CD4-positive, alpha-beta memory T cell (primary cell): ENCODE measurements at regions of chr2 and their contacts with region 1.

Region 1: GRCh38 chr2:102355526-102356380 is at the start of gene IL18R1:
- DNase-seq: peak; percentile 63 to 72 (median 67)
- H3K4me3 ChIP-seq: peak within 1 kb of the TSS; percentile 80 to 81
- H3K4me3 Mint-ChIP-seq: peak within 1 kb of the TSS; percentile 94 to 99 (median 98)
- H3K27ac ChIP-seq: peak within 1 kb of the TSS; percentile 85
- H3K27ac Mint-ChIP-seq: peak within 1 kb of the TSS; percentile 93 to 98 (median 96)
- H3K4me1 ChIP-seq: peaks cover 46% of the 10 kb centered on the region
- H3K4me1 Mint-ChIP-seq: peaks cover 30 to 46% (median 38%) of the 10 kb centered on the region in 4 donors
- H3K27me3 ChIP-seq: no peaks in the 10 kb centered on the region
- H3K27me3 Mint-ChIP-seq: no peaks in the 10 kb centered on the region
- total RNA-seq, gene IL18R1: 9.5 to 11.0 TPM

Region 2: DNA sequence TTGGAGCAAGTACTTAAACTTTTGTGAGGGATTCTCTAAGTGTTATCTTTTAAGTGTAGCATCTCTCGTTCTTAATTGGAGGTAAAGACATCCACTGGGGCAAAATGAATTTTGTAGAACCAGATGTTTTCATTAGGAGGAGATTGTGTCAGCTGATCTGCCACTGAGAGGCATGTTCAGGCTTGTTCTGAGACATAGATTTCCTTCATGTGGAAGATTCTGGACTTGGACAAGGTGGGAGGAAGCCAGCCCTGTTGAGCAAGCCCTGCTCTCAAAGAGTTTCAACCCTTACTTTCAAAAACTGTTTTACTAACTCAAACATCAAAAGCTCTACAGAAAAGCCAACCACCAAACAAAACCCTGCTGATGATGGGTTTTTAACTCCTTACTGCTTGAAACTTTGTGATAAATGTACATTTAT is 651.7 kb before region 1 on chr2:
- CTCF ChIA-PET with region 1: no interaction called
- POLR2A ChIA-PET with region 1: no interaction called
- intact Hi-C with region 1: loop called (anchors 5 kb)
- DNase-seq: peak in 3 of 5 donors; percentile 44 to 45 (median 44)
- H3K4me3 ChIP-seq: no peak overlapping the region
- H3K4me3 Mint-ChIP-seq: peak overlapping the region; percentile 64 to 94 (median 90)
- H3K27ac ChIP-seq: peak overlapping the region; percentile 58
- H3K27ac Mint-ChIP-seq: peak overlapping the region; percentile 90 to 99 (median 96)
- H3K4me1 ChIP-seq: peaks cover 95% of the 10 kb centered on the region
- H3K4me1 Mint-ChIP-seq: peaks cover 12 to 67% (median 54%) of the 10 kb centered on the region in 4 donors
- H3K27me3 ChIP-seq: no peaks in the 10 kb centered on the region
- H3K27me3 Mint-ChIP-seq: no peaks in the 10 kb centered on the region

Region 3: GRCh38 chr2:102082571-102083392 is 273.0 kb before region 1 on chr2:
- CTCF ChIA-PET with region 1: interaction called, 3 read pairs
- POLR2A ChIA-PET with region 1: no interaction called
- intact Hi-C with region 1: loop called (anchors 10 kb)
- DNase-seq: peak; percentile 51 to 65 (median 54)
- H3K4me3 ChIP-seq: peak overlapping the region; percentile 2 to 32
- H3K4me3 Mint-ChIP-seq: peak overlapping the region; percentile 81 to 87 (median 84)
- H3K27ac ChIP-seq: peak overlapping the region; percentile 46
- H3K27ac Mint-ChIP-seq: peak overlapping the region; percentile 86 to 97 (median 95)
- H3K4me1 ChIP-seq: peaks cover 29% of the 10 kb centered on the region
- H3K4me1 Mint-ChIP-seq: peaks cover 26 to 43% (median 35%) of the 10 kb centered on the region in 4 donors
- H3K27me3 ChIP-seq: no peaks in the 10 kb centered on the region
- H3K27me3 Mint-ChIP-seq: no peaks in the 10 kb centered on the region

Region 4: GRCh38 chr2:102301867-102302362 is 53.8 kb before region 1 on chr2:
- CTCF ChIA-PET with region 1: interaction called, 6 read pairs
- POLR2A ChIA-PET with region 1: interaction called, 3 read pairs
- intact Hi-C with region 1: loop called (anchors 1 kb)
- DNase-seq: peak; percentile 33 to 60 (median 40)
- H3K4me3 ChIP-seq: no peak overlapping the region
- H3K4me3 Mint-ChIP-seq: peak overlapping the region in 6 of 8 donors; percentile 11 to 77 (median 50)
- H3K27ac ChIP-seq: no peak overlapping the region
- H3K27ac Mint-ChIP-seq: peak overlapping the region in 2 of 7 donors; percentile 43 to 54
- H3K4me1 ChIP-seq: peaks cover 12% of the 10 kb centered on the region
- H3K4me1 Mint-ChIP-seq: peaks cover 13 to 18% (median 15%) of the 10 kb centered on the region in 4 donors
- H3K27me3 ChIP-seq: no peaks in the 10 kb centered on the region
- H3K27me3 Mint-ChIP-seq: peaks cover 3 to 5% of the 10 kb centered on the region in 2 donors

Region 5: GRCh38 chr2:102313025-102313424 is 42.7 kb before region 1 on chr2:
- CTCF ChIA-PET with region 1: no interaction called
- POLR2A ChIA-PET with region 1: no interaction called
- intact Hi-C with region 1: no loop called
- DNase-seq: no peak
- H3K4me3 ChIP-seq: no peak overlapping the region
- H3K4me3 Mint-ChIP-seq: no peak overlapping the region
- H3K27ac ChIP-seq: no peak overlapping the region
- H3K27ac Mint-ChIP-seq: no peak overlapping the region
- H3K4me1 ChIP-seq: no peaks in the 10 kb centered on the region
- H3K4me1 Mint-ChIP-seq: no peaks in the 10 kb centered on the region
- H3K27me3 ChIP-seq: no peaks in the 10 kb centered on the region
- H3K27me3 Mint-ChIP-seq: peaks cover 2 to 5% of the 10 kb centered on the region in 2 donors

Region 6: DNA sequence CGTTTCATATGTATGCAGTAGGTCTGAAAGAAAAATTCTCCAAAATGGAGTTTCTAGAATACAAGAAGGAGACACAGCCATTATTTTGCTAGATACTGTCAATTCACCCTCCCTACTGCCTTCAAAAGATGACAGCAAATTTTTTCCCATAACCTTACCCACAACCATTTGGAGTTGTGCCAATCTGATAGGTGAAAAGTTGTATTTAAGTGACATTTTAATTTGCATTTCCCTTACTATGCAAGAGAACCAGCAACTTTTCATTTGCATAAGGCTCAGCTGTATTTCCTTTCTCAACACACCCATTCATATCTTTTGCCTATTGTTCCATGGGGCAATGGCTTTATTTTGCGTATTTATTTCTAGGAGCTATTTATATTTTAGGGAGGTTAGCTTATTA is 35.8 kb after region 1 on chr2:
- CTCF ChIA-PET with region 1: interaction called, 5 read pairs
- POLR2A ChIA-PET with region 1: no interaction called
- intact Hi-C with region 1: loop called (anchors 5 kb)
- DNase-seq: peak; percentile 63 to 77 (median 73)
- H3K4me3 ChIP-seq: no peak overlapping the region
- H3K4me3 Mint-ChIP-seq: peak overlapping the region in 5 of 8 donors; percentile 1 to 51 (median 23)
- H3K27ac ChIP-seq: no peak overlapping the region
- H3K27ac Mint-ChIP-seq: peak overlapping the region in 5 of 7 donors; percentile 5 to 60 (median 43)
- H3K4me1 ChIP-seq: peaks cover 16% of the 10 kb centered on the region
- H3K4me1 Mint-ChIP-seq: peaks cover 17 to 35% (median 30%) of the 10 kb centered on the region in 4 donors
- H3K27me3 ChIP-seq: no peaks in the 10 kb centered on the region
- H3K27me3 Mint-ChIP-seq: no peaks in the 10 kb centered on the region

Region 7: DNA sequence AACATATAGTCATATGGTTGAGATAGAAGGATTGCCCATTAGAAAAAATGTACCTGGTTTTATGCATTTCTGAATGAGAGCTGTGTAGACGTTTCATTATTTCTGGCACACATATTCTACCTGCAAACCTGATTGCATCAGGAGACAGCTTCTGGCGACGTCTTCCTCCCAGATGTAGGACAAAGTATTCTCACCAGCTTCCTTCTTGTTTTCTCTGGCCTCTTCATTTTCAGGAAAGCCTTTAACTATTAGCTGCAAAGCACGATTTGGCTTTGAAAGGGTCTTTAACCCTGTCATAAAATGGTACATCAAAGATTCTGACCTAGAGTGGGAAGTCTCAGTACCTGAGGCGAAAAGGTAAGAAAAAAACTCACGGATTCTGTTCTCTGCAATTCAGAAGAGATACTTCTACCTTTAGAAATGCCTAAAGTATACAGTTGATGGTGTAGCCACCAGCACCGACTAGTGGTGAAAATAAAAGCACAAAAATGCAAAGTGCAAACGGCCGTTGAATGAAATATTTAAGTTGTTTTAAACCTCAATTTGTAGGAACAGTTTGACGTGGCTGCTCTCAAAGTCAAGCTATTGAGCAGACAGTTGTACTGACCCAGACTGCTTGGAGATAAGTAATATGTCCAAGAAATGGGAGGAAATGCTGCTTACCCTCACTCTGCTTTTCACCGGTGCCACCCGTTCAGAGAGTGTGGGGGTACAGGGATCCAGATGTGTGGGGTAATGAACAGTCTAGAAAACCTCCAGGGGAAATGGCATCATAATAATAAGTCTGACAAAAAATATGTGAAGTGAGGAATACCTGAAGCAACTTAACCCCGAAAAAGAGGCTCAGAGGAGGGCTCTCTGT is 87.4 kb after region 1 on chr2:
- CTCF ChIA-PET with region 1: interaction called, 71 read pairs
- POLR2A ChIA-PET with region 1: interaction called, 6 read pairs
- intact Hi-C with region 1: loop called (anchors 1 kb)
- DNase-seq: peak; percentile 43 to 59 (median 56)
- H3K4me3 ChIP-seq: no peak overlapping the region
- H3K4me3 Mint-ChIP-seq: peak overlapping the region in 5 of 8 donors; percentile 19 to 75 (median 66)
- H3K27ac ChIP-seq: no peak overlapping the region
- H3K27ac Mint-ChIP-seq: peak overlapping the region in 5 of 7 donors; percentile 43 to 92 (median 53)
- H3K4me1 ChIP-seq: peaks cover 5% of the 10 kb centered on the region
- H3K4me1 Mint-ChIP-seq: peaks cover 8 to 11% (median 8%) of the 10 kb centered on the region in 4 donors
- H3K27me3 ChIP-seq: no peaks in the 10 kb centered on the region
- H3K27me3 Mint-ChIP-seq: no peaks in the 10 kb centered on the region